ENCODE measurements at regions of chr20 and their contacts with region 1.

Region 1: GRCh38 chr20:56222196-56222595 is 26.3 kb upstream of the MC3R start:
- DNase-seq: no peak
- ATAC-seq: no peak
- H3K4me3 ChIP-seq: no peak overlapping the region
- H3K27ac ChIP-seq: no peak overlapping the region
- H3K4me1 ChIP-seq: no peaks in the 10 kb centered on the region
- H3K27me3 ChIP-seq: peaks cover 0 to 2% (median 0%) of the 10 kb centered on the region in 3 donors
- CTCF ChIP-seq: no peak

Region 2: DNA sequence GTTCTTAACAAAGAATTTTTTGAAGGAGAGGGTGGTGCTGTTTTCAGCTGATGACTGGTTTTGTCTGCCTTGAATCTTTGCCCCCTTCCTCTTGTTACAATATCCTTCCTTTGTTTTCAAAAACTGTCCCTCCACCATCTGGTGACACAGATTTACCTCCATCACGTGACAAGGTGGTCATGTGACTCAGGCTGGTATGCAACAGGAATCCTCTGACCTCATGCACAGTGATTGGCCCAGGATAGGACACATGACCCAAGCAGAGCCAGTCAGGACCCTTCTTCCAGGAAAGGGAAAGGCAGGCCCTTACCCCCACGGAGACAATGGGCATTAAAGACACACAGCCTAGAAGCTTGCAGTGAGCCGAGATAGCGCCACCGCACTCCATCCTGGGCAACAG is 58.4 kb before region 1 on chr20:
- intact Hi-C with region 1: loop called in 1 of 2 experiments (anchors 10 kb)
- DNase-seq: no peak
- ATAC-seq: no peak
- H3K4me3 ChIP-seq: no peak overlapping the region
- H3K27ac ChIP-seq: no peak overlapping the region
- H3K4me1 ChIP-seq: no peaks in the 10 kb centered on the region
- H3K27me3 ChIP-seq: no peaks in the 10 kb centered on the region
- CTCF ChIP-seq: no peak